Dendritic cell treated with granulocyte-macrophage colony-stimulating factor and Interleukin-4, amounts not matched to agents 40 ng/mL and 50 ng/mL, for 4 days (primary cell): ENCODE measurements at regions of chr17 and their contacts with region 1.

Region 1: DNA sequence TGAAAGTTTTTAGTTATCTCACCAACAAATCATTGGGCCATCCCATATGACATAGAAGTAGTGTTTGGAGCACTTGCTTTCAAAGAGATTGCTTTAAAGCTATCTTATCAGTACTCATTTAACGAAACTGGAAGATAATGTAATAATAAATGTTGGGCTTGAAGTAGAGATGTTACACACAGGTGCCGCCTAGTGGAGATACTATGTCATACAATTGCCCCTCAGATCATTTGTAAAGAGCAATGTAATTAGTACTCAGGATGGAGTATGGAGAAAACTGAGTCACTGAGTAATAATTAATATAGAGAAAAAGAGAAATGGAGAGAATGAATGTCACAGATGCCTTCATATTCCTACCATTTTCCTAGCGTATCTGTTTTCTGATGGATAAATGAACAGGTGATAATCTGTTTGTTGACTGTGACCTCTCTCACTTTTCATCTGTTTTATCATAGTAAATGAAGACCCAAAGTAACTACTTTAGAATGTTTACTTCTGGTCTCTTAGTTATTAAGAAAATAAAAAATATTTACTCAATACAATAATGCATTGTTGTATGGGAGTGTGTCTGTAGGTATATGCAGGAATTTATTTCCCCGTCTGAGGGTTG is 80.4 kb downstream of the EFCAB5 start:
- H3K4me3 Mint-ChIP-seq: no peak overlapping the region
- H3K27ac Mint-ChIP-seq: no peak overlapping the region
- H3K4me1 Mint-ChIP-seq: no peaks in the 10 kb centered on the region
- H3K27me3 Mint-ChIP-seq: peaks cover 2% of the 10 kb centered on the region

Region 2: GRCh38 chr17:29640413-29640812 is 381.4 kb before region 1 on chr17:
- intact Hi-C with region 1: loop called (anchors 5 kb)
- H3K4me3 Mint-ChIP-seq: no peak overlapping the region
- H3K27ac Mint-ChIP-seq: no peak overlapping the region
- H3K4me1 Mint-ChIP-seq: peaks cover 36% of the 10 kb centered on the region
- H3K27me3 Mint-ChIP-seq: no peaks in the 10 kb centered on the region

Region 3: DNA sequence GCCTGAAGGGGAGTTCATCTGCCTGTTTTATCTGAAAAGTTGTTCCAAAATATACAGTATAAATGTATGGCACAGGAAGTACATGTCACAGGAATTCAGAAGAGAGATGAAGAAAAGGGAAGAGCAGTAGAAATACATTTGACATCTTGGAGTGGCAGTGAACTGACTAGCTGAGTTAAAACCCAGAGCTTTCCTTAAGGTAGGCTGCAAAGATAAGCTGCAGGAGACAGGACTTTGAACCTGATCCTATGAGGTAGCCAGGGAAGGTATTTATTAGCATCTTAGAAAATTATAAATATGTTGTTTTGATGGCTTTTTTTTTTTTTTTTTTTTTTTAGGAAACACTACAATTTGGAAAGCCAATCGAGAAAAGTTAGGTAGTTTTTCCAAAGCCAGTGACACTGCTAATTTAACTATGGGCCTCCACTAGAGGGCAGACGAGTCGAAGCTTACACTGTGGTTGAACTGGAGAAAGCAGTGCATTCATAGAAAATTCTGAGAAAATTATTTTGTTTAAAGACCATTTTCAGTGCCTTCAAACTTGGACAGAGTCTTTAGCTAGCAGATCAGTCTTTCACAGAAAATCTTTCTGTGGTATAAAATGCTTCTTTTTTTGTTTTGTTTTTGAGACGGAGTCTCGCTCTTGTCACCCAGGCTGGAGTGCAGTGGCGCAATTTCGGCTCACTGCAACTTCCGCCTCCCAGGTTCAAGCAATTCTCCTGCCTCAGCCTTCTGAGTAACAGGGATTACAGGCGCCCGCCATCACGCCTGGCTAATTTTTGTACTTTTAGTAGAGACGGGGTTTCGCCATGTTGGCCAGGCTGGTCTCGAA is 214.1 kb before region 1 on chr17:
- intact Hi-C with region 1: loop called (anchors 1 kb)
- H3K4me3 Mint-ChIP-seq: peak overlapping the region; percentile 73
- H3K27ac Mint-ChIP-seq: peak overlapping the region; percentile 85
- H3K4me1 Mint-ChIP-seq: peaks cover 13% of the 10 kb centered on the region
- H3K27me3 Mint-ChIP-seq: no peaks in the 10 kb centered on the region

Region 4: DNA sequence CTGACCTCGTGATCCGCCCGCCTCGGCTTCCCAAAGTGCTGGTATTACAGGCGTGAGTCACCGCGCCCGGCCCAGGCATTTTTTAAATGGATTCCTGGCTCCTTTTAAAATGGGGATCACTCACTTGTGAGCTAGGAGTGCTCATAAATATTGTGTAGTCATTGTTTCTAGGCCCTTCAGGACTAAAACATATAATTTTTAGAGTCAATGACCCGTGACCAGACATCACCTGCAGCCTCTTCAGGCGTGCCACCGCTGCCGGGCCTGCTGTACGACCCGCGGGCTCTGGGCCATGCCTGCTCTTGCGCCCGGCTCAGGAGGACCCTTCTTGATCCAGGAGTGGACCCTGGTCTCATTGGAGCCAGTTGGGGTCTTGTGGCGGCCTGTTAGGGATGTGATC is 49.5 kb before region 1 on chr17:
- intact Hi-C with region 1: no loop called
- H3K4me3 Mint-ChIP-seq: no peak overlapping the region
- H3K27ac Mint-ChIP-seq: no peak overlapping the region
- H3K4me1 Mint-ChIP-seq: no peaks in the 10 kb centered on the region
- H3K27me3 Mint-ChIP-seq: no peaks in the 10 kb centered on the region

Region 5: GRCh38 chr17:30093463-30094147 is 71.8 kb after region 1 on chr17:
- intact Hi-C with region 1: loop called (anchors 1 kb)
- H3K4me3 Mint-ChIP-seq: no peak overlapping the region
- H3K27ac Mint-ChIP-seq: no peak overlapping the region
- H3K4me1 Mint-ChIP-seq: peaks cover 9% of the 10 kb centered on the region
- H3K27me3 Mint-ChIP-seq: no peaks in the 10 kb centered on the region